ENCODE measurements at regions of chr9 and their contacts with region 1.

Region 1: GRCh38 chr9:4760122-4760521 is 19.1 kb upstream of the AK3 start:
- DNase-seq: no peak
- H3K4me3 Mint-ChIP-seq: no peak overlapping the region
- H3K27ac Mint-ChIP-seq: no peak overlapping the region
- H3K4me1 Mint-ChIP-seq: peaks cover 25% of the 10 kb centered on the region
- H3K27me3 Mint-ChIP-seq: peaks cover 4% of the 10 kb centered on the region

Region 2: GRCh38 chr9:4706971-4707622 is 53.0 kb before region 1 on chr9:
- CTCF ChIA-PET with region 1: no interaction called
- POLR2A ChIA-PET with region 1: no interaction called
- DNase-seq: no peak
- H3K4me3 Mint-ChIP-seq: no peak overlapping the region
- H3K27ac Mint-ChIP-seq: no peak overlapping the region
- H3K4me1 Mint-ChIP-seq: peaks cover 6% of the 10 kb centered on the region
- H3K27me3 Mint-ChIP-seq: no peaks in the 10 kb centered on the region

Region 3: DNA sequence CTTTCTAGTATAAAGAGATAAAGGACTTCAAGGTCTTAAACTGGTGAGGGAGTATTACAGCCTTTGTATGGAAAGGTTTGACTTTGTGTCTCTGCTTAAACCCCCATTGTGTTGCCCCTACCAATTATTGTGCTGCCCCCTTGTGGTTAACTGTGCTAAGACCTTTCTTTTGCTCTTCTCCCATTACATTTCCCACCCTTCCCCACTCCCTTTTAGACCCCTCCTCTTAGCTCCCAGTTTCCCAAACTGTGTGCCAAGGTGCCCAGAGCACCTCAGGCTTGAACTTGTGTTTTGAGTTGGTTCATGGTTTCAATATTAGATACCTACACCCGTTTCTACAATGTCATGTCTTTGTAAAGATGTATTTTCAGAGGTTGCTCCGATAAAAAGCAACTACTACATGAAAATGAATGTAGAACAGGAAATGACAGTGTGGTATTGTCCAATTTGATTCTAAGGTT is 227.9 kb after region 1 on chr9:
- CTCF ChIA-PET with region 1: interaction called, 10 read pairs
- POLR2A ChIA-PET with region 1: no interaction called
- DNase-seq: peak; percentile 80
- H3K4me3 Mint-ChIP-seq: no peak overlapping the region
- H3K27ac Mint-ChIP-seq: no peak overlapping the region
- H3K4me1 Mint-ChIP-seq: peaks cover 31% of the 10 kb centered on the region
- H3K27me3 Mint-ChIP-seq: no peaks in the 10 kb centered on the region

Measured in activated CD4-positive, alpha-beta T cell treated with anti-CD3 and anti-CD28 coated beads, Interleukin-2, amount 10 ng/mL, durations not matched to agents 7 days and 5 days (primary cell).